A549 (cell line): ENCODE measurements at regions of chr17 and their contacts with region 1.

Region 1: DNA sequence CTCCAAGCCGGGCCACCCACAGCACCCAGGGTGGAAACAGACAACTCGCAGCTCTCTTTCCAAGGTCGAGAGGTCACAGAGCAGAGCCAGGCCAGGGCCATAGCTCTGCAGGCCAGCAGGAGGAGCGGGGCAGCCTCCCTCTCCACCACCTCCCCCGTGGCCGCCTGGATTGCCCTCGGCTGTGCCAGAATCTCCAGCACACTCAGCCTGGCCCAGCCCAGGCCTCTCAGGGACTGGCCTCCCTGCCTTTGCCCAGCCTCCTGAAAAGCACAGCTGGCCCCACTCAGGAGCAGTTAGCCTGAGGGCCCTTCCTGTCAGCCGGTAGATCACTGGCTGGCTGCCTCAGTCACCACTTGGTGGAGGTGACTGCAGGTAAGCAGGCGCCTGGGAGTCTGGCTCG is 85.8 kb upstream of the SEC14L1 start:
- DNase-seq: no peak
- ATAC-seq: peak; percentile 27 to 39; a peak in 5 of 6 replicates
- H3K4me3 ChIP-seq: no peak overlapping the region
- H3K27ac ChIP-seq: peak overlapping the region; percentile 26 to 86; a peak in 5 of 6 replicates
- H3K4me1 ChIP-seq: peaks cover 14% of the 10 kb centered on the region
- CTCF ChIP-seq: no peak
- EP300 ChIP-seq: no peak
- POLR2A ChIP-seq: no peak
- RAD21 ChIP-seq: no peak

Region 2: GRCh38 chr17:76816590-76817135 is 238.3 kb before region 1 on chr17:
- CTCF ChIA-PET with region 1: interaction called, 37 read pairs
- POLR2A ChIA-PET with region 1: no interaction called
- DNase-seq: peak; percentile 75 to 85
- ATAC-seq: peak; percentile 93 to 95
- H3K4me3 ChIP-seq: no peak overlapping the region
- H3K27ac ChIP-seq: no peak overlapping the region
- H3K4me1 ChIP-seq: no peaks in the 10 kb centered on the region
- CTCF ChIP-seq: peak; percentile 88
- EP300 ChIP-seq: no peak
- POLR2A ChIP-seq: no peak
- RAD21 ChIP-seq: peak; percentile 88 to 91

Region 3: DNA sequence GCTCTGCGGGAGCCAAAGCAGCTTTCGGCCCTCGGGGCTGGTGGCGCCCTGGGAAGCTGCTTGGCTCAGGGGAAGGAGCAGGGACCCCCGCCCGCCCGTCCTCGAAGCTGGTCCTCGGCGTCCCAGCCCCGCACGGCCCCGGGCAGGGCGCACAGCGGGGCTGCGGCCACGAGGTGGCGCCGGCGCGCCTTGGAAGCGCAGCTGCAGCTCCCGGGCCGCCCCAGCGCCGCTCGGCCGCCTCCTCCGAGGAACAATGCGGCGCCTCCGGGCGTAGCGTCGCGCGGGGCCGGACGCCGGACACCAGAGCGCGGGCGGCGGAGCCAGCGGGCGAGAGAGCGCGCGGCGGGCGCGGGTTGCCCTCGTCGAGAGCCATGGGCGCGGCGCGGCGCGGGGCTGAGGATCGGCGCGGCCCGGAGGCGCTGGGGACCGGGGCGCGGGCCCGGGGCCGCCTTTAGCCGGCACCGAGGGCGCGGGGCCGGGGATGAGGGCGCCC is 186.7 kb before region 1 on chr17 and contains the start of gene MGAT5B:
- CTCF ChIA-PET with region 1: interaction called, 776 read pairs
- POLR2A ChIA-PET with region 1: interaction called, 17 read pairs
- DNase-seq: peak; percentile 87 to 96
- ATAC-seq: peak; percentile 69 to 84
- H3K4me3 ChIP-seq: peak within 1 kb of the TSS; percentile 70
- H3K27ac ChIP-seq: peak within 1 kb of the TSS; percentile 93 to 97
- H3K4me1 ChIP-seq: peaks cover 52% of the 10 kb centered on the region
- CTCF ChIP-seq: peak; percentile 99
- EP300 ChIP-seq: no peak
- POLR2A ChIP-seq: peak; percentile 38
- RAD21 ChIP-seq: peak; percentile 84 to 100
- polyA plus RNA-seq, gene MGAT5B: 7.6 and 10.3 TPM in 2 replicates

Region 4: GRCh38 chr17:76909971-76910760 is 144.8 kb before region 1 on chr17:
- CTCF ChIA-PET with region 1: interaction called, 21 read pairs
- POLR2A ChIA-PET with region 1: no interaction called
- DNase-seq: peak; percentile 29 to 46
- ATAC-seq: peak; percentile 44 to 61; a peak in 4 of 6 replicates
- H3K4me3 ChIP-seq: no peak overlapping the region
- H3K27ac ChIP-seq: no peak overlapping the region
- H3K4me1 ChIP-seq: peaks cover 6% of the 10 kb centered on the region; the same call in 2 of the 3 replicates
- CTCF ChIP-seq: no peak
- EP300 ChIP-seq: no peak
- POLR2A ChIP-seq: no peak
- RAD21 ChIP-seq: no peak

Region 5: GRCh38 chr17:76957678-76958464 is 97.1 kb before region 1 on chr17:
- CTCF ChIA-PET with region 1: interaction called, 39 read pairs
- POLR2A ChIA-PET with region 1: no interaction called
- DNase-seq: no peak
- ATAC-seq: peak in 1 of 2 experiments; percentile 11; a peak in 3 of 6 replicates
- H3K4me3 ChIP-seq: no peak overlapping the region
- H3K27ac ChIP-seq: peak overlapping the region in 1 of 2 experiments; percentile 32; a peak in 3 of 6 replicates
- H3K4me1 ChIP-seq: no peaks in the 10 kb centered on the region
- CTCF ChIP-seq: no peak
- EP300 ChIP-seq: no peak
- POLR2A ChIP-seq: no peak
- RAD21 ChIP-seq: no peak

Region 6: DNA sequence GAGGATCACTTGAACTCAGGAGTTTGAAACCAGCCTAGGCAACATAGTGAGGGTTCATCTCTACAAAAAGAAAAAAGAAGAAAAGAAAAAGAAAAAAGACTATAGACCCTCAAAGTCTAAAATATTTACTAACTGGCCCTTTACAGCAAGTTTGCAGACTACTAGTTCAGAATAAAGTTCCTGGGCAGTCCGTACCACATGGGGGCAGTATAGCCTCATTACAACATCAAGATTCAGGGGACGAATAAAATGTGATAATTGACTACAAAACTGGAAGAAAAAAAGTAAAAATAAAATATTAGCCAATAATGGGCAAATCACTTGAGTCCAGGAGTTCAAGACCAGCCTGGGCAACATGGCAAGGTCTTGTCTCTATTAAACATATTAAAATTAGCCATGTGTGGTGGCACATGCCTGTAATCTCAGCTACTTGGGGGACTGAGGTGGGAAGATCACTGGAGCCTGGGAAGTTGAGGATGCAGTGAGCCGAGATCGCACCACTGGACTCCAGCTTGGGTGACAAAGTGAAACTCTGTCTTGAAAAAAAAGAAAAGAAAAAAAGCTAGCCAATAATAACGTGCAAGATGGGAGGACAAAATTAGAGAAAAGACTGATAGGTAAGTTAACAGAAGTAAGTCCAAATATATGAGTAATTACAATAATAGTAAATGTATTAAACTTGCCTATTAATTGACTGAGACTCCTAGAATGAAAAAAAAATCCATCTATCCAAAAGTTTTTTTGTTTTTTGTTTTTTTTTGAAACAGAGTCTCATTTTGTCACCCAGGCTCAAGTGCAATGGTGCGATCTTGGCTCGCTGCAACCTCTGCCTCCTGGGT is 43.5 kb before region 1 on chr17:
- CTCF ChIA-PET with region 1: interaction called, 97 read pairs
- POLR2A ChIA-PET with region 1: no interaction called
- DNase-seq: peak in 1 of 2 experiments; percentile 65
- ATAC-seq: 0 out of 6 replicates have a peak, but pooled peaks of 1 of the 2 experiments have one; percentile 41
- H3K4me3 ChIP-seq: no peak overlapping the region
- H3K27ac ChIP-seq: no peak overlapping the region
- H3K4me1 ChIP-seq: no peaks in the 10 kb centered on the region
- CTCF ChIP-seq: peak; percentile 42; the same call in 2 of the 3 replicates
- EP300 ChIP-seq: no peak
- POLR2A ChIP-seq: no peak
- RAD21 ChIP-seq: peak; percentile 48 to 71

Region 7: GRCh38 chr17:77088455-77089123 is 33.7 kb after region 1 on chr17:
- CTCF ChIA-PET with region 1: interaction called, 12 read pairs
- POLR2A ChIA-PET with region 1: no interaction called
- DNase-seq: peak; percentile 99
- ATAC-seq: peak; percentile 91 to 96
- H3K4me3 ChIP-seq: peak overlapping the region; percentile 99
- H3K27ac ChIP-seq: peak overlapping the region; percentile 96 to 100
- H3K4me1 ChIP-seq: peaks cover 28% of the 10 kb centered on the region
- CTCF ChIP-seq: peak; percentile 73
- EP300 ChIP-seq: no peak
- POLR2A ChIP-seq: peak; percentile 88
- RAD21 ChIP-seq: peak; percentile 46 to 67